Activated CD4-positive, alpha-beta T cell treated with anti-CD3 and anti-CD28 coated beads for 36 hours (primary cell): ENCODE measurements at regions of chr7 and their contacts with region 1.

Region 1: GRCh38 chr7:127375631-127376030 is 16.9 kb downstream of the ZNF800 start:
- DNase-seq: no peak
- ATAC-seq: peak; percentile 98
- H3K4me3 Mint-ChIP-seq: no peak overlapping the region
- H3K27ac Mint-ChIP-seq: no peak overlapping the region
- H3K4me1 Mint-ChIP-seq: peaks cover 52% of the 10 kb centered on the region
- H3K27me3 Mint-ChIP-seq: no peaks in the 10 kb centered on the region

Region 2: DNA sequence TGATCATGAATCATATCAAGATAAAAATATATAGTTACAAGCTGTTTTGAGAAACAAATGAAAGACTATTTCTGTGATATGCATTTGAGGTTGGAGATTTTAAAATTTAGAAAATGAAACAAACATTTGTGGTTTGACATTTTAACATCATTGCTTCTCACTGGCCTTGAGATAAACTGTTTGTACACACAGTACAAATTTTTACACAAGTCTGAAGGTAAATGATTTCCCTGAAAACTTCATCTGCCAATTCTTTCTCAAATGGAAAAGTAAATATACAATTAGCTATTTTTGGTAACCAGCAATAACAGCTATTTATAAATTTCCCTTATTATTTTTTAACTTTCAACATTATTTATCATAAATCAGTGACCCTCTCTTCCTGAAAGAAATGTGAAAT is 21.7 kb before region 1 on chr7:
- CTCF ChIA-PET with region 1: interaction called, 5 read pairs
- POLR2A ChIA-PET with region 1: no interaction called
- intact Hi-C with region 1: loop called in 1 of 2 experiments (anchors 2 kb)
- DNase-seq: no peak
- ATAC-seq: no peak
- H3K4me3 Mint-ChIP-seq: no peak overlapping the region
- H3K27ac Mint-ChIP-seq: no peak overlapping the region
- H3K4me1 Mint-ChIP-seq: peaks cover 18% of the 10 kb centered on the region
- H3K27me3 Mint-ChIP-seq: no peaks in the 10 kb centered on the region

Region 3: DNA sequence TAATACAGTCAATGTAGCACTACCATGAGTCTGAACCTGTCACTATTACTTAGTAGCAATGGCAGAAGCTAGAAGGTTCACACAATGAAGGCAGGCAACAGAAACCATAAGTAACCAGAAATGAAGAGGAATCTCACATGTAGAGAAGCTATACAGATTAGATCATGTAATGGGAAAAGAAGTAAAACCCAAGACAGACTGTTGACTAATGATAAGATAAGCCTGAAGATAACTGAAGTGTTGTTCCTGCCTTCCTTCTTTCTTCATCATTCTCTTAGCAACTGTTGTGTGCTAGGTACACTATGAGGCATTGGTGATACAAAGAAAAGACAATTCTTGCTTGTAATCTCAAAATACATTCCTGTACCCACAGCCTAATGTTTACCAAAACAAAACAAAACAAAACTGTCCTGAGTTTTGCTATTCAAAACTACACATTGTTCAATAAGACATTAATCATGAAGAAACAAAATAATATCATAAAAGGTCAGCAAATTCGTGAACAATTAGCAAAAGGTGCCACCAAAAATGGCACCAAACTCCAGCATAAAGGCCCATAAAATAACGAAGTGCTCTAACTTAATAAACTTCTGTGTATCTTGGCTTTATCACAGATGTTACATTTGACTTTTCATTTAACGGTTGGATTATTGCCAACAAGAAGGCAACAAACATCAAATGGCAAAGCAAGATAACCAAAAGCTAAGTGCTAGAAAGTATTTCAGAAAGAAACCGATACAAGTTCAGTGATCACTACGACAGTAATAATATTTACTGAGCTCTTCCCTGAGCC is 10.3 kb before region 1 on chr7:
- CTCF ChIA-PET with region 1: no interaction called
- POLR2A ChIA-PET with region 1: no interaction called
- intact Hi-C with region 1: no loop called
- DNase-seq: no peak
- ATAC-seq: no peak
- H3K4me3 Mint-ChIP-seq: no peak overlapping the region
- H3K27ac Mint-ChIP-seq: no peak overlapping the region
- H3K4me1 Mint-ChIP-seq: peaks cover 28% of the 10 kb centered on the region
- H3K27me3 Mint-ChIP-seq: no peaks in the 10 kb centered on the region

Region 4: GRCh38 chr7:127413962-127414361 is 38.3 kb after region 1 on chr7:
- CTCF ChIA-PET with region 1: no interaction called
- POLR2A ChIA-PET with region 1: no interaction called
- intact Hi-C with region 1: loop called in 1 of 2 experiments (anchors 2 kb)
- DNase-seq: no peak
- ATAC-seq: peak; percentile 73
- H3K4me3 Mint-ChIP-seq: no peak overlapping the region
- H3K27ac Mint-ChIP-seq: peak overlapping the region; percentile 4
- H3K4me1 Mint-ChIP-seq: peaks cover 40% of the 10 kb centered on the region
- H3K27me3 Mint-ChIP-seq: no peaks in the 10 kb centered on the region